ENCODE measurements at regions of chr11 and their contacts with region 1.

Region 1: DNA sequence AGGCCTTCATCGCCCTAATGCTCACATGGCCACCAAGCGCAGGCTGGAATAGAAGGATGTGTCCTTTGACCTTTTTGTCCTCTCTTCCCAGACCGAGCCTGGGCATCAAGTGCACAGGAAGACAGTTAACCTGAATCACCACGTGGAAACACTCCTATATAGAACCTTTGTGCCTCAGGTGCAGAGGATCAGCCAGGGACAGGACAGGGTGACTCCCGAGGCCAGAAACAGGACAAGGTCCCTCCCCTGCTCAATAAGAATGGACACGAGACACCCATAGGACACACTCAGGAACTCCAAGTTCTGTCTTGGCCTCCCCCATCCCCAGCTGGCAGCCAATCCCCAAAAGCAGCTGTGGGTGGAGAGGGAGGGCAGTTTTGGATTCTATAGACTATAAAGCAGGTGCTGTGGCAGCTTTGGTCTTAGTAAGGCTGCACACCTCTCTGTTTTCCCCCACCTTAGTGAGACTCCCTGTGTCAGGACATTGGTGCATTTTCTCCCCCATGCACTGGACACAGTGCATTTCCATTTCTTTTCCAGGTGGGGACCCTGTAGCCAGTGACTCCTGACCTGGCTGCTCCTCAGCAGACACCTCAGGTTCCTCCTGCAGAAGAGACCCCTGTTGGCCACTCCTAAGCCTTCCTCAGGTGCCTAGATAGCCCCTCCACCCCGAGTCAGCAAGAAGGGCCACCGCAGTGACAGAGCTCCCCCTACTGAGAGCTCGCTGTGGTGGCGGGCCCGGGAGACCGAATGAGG is 43.6 kb upstream of the POU2AF1 start:
- DNase-seq: peak in 8 of 10 donors; percentile 24 to 93 (median 62)

Region 2: GRCh38 chr11:111299101-111300026 is 123.3 kb before region 1 on chr11:
- intact Hi-C with region 1: loop called (anchors 5 kb)
- DNase-seq: peak; percentile 37 to 95 (median 74)

Region 3: GRCh38 chr11:111310088-111310487 is 112.6 kb before region 1 on chr11:
- intact Hi-C with region 1: no loop called
- DNase-seq: no peak

Region 4: GRCh38 chr11:111378861-111379601 is 43.6 kb before region 1 on chr11 and contains the start of gene POU2AF1:
- intact Hi-C with region 1: no loop called
- DNase-seq: no peak

Region 5: DNA sequence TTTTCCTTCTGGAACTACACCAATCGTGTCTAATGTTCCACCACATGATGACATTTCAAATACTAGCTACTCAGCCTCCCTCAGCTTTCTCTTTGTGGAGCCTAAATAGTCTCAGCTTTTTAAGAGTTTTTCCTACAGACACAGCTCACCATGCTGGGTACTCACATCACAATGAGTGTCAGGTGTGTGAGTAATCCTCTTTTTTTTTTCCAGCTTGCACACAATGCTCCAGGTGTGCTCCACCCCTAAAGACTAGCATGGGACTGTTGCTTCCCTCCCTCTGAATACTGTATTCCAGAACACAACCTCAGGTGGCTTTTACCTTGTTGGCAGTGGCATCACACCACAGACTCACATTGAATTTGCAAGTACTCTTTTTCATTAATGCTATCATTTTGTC is 77.8 kb after region 1 on chr11:
- intact Hi-C with region 1: no loop called
- DNase-seq: no peak

Region 6: GRCh38 chr11:111642542-111642941 is 219.9 kb after region 1 on chr11:
- intact Hi-C with region 1: no loop called
- DNase-seq: no peak

Measured in posterior cingulate gyrus (tissue), 11 donors.